ENCODE measurements at regions of chrX and their contacts with region 1.

Region 1: DNA sequence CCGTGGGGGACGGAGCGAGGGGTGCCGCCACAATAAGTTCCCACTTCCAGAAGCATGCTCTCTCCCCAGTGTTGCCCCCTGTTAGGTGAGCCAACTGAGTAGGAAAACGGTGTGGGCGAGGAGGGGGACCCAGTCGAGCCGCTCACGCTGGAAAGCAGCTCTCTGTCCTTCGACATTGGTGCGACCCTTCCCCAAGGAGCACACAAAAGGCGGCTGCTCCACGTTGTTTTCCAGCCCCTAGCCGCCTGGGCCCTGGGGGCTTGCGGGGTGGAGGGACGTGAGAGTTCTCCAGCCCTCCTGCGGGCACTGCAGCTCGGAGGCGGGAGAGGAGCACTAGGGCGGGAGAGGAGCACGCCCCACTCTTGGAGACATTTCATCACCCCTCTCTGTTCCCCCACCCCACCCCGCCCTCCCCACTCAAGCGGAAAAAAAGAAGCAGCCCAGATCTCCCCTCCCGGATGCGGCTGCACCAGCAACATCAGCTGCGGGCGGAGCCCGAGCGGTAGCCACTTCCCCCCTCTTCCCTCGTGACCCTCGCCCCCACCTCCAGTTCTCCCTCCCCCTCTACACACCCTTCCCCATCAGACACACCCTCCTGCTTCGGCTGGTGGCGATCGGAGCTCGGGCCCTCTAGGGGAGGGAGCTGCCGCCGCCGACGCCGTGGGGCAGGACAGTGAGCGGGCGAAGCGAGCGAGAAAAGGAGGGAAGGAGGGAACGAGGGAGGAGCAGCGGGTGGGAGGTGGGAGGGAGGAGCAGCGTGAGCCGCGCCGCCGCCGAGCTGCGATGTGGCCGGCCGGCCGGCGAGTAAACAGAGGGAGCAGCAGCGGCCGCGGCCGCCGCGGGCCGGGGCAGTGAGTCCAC is at the start of gene DOCK11:
- DNase-seq: peak; percentile 93
- H3K4me3 Mint-ChIP-seq: peak within 1 kb of the TSS; percentile 99
- H3K27ac Mint-ChIP-seq: peak within 1 kb of the TSS; percentile 98
- H3K4me1 Mint-ChIP-seq: peaks cover 18% of the 10 kb centered on the region
- H3K27me3 Mint-ChIP-seq: no peaks in the 10 kb centered on the region
- total RNA-seq, gene DOCK11: 27.8 and 28.6 TPM in 2 replicates

Region 2: DNA sequence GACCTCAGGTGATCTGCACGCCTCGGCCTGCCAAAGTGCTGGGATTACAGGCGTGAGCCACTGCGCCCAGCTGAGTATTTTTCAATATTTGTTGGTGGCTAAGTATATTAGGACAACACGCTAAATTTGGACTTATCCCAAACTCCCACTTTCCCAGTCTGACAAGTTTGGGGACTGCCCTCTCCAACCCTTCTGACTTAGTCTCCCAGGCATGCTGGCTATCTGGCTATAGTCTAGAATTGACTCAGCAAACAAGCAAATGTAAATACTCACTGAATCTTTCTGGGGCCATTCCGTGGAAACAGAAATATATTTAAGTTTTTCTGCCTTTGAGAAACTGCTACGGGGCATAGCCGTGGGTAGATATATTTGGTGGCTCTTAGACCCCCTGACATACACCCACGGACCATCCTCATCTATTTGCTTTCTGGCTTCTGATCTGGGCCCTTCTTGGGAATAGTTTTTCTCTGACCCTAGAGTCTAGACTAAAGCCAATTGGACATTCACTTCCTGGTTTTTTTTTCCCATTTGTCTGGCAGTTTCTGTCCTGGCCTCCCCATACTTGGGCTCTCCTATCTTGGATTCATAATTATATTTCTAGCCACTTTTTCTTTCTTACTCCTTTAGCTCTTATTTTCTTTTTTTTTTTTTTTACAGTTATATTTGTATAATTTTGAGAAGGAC is 10.9 kb before region 1 on chrX:
- intact Hi-C with region 1: no loop called
- DNase-seq: no peak
- H3K4me3 Mint-ChIP-seq: no peak overlapping the region
- H3K27ac Mint-ChIP-seq: no peak overlapping the region
- H3K4me1 Mint-ChIP-seq: no peaks in the 10 kb centered on the region
- H3K27me3 Mint-ChIP-seq: no peaks in the 10 kb centered on the region

Region 3: DNA sequence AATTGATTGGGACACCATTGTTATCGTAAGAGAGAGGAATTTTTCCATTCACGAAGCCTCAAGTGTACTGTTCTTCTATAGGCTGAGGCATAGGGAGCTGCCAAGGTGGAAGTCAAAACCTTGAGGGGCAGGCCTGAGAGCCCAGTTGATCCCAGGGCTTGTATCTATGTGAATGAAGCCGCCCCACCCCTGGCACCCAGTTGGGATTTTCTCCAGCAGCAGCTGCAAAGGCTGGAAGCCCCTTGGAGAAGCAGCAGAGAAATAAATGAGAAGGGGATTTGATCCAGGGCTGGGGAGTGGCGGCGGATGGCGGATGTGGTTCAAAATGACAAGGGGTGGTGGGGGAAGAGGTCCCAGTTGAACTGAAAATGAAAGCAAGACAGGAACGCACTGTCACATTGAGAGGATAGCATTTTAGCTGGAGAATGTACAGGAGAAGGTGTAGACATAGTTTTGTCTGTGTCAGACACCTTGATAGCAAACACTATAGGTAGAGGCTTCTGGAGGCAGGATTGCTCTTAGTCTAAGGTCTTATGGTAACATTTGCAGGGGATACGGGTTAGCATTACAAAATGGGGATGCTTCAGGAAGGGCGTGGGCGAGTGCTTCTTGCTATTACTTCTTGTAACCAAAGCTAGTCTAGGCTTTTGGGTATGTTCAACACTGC is 32.9 kb after region 1 on chrX:
- intact Hi-C with region 1: loop called (anchors 1 kb)
- DNase-seq: peak; percentile 87
- H3K4me3 Mint-ChIP-seq: peak overlapping the region; percentile 92
- H3K27ac Mint-ChIP-seq: peak overlapping the region; percentile 99
- H3K4me1 Mint-ChIP-seq: peaks cover 50% of the 10 kb centered on the region
- H3K27me3 Mint-ChIP-seq: no peaks in the 10 kb centered on the region

Region 4: DNA sequence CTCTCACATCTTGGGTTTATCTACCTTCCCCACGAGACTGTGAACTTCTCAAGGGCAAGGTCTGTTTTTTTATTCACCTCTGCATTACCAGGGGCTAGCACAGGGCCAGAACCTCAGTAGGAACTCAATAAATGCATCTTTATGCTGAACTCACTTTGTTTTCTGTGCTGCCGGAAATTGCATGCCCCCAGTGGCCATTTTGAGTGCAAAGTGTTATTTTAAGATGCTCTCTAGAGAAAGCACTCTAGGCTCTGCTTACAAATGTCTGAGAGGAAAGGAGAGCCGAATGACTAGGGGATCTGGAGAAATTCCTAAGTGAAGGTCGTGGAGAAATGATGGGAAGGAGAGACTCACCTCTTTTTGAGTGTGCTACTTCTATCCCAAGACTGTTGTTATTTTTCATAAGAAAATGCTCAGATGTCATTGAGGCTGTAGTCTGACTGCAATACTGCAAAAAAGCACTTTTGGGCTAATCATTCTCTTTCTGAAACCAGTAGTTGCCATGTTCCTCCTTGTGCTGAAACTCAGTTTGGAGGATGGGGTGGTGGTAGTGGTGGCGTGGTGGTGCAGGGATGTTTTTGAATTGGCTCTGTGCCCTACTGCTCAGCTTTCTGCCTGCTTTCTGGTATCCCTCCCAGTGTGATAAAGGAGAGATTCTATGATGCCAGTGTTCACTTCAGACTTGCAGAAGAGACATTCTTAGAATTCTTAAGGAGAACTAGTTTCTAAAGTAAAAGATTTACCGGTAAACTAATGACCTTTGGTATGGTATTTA is 41.6 kb after region 1 on chrX:
- intact Hi-C with region 1: loop called (anchors 1 kb)
- DNase-seq: peak; percentile 82
- H3K4me3 Mint-ChIP-seq: peak overlapping the region; percentile 74
- H3K27ac Mint-ChIP-seq: peak overlapping the region; percentile 88
- H3K4me1 Mint-ChIP-seq: peaks cover 44% of the 10 kb centered on the region
- H3K27me3 Mint-ChIP-seq: no peaks in the 10 kb centered on the region

Region 5: GRCh38 chrX:118571829-118572228 is 76.5 kb after region 1 on chrX:
- intact Hi-C with region 1: loop called (anchors 2 kb)
- DNase-seq: no peak
- H3K4me3 Mint-ChIP-seq: no peak overlapping the region
- H3K27ac Mint-ChIP-seq: no peak overlapping the region
- H3K4me1 Mint-ChIP-seq: peaks cover 9% of the 10 kb centered on the region
- H3K27me3 Mint-ChIP-seq: no peaks in the 10 kb centered on the region

Region 6: GRCh38 chrX:118593407-118593806 is 98.1 kb after region 1 on chrX:
- intact Hi-C with region 1: no loop called
- DNase-seq: no peak
- H3K4me3 Mint-ChIP-seq: no peak overlapping the region
- H3K27ac Mint-ChIP-seq: no peak overlapping the region
- H3K4me1 Mint-ChIP-seq: peaks cover 4% of the 10 kb centered on the region
- H3K27me3 Mint-ChIP-seq: no peaks in the 10 kb centered on the region

Measured in activated CD4-positive, alpha-beta T cell treated with anti-CD3 and anti-CD28 coated beads, Interleukin-2, amount 10 ng/mL, durations not matched to agents 24 days and 14 days (primary cell).